Naive thymus-derived CD4-positive, alpha-beta T cell (primary cell): ENCODE measurements at regions of chr9 and their contacts with region 1.

Region 1: GRCh38 chr9:99906403-99907207 is at the start of gene STX17:
- DNase-seq: peak; percentile 78 to 94 (median 88)
- ATAC-seq: peak; percentile 90
- H3K4me3 ChIP-seq: peak within 1 kb of the TSS; percentile 96
- H3K4me3 Mint-ChIP-seq: peak within 1 kb of the TSS; percentile 92 to 99 (median 97)
- H3K27ac ChIP-seq: peak within 1 kb of the TSS; percentile 99
- H3K27ac Mint-ChIP-seq: peak within 1 kb of the TSS; percentile 96 to 100 (median 99)
- H3K4me1 ChIP-seq: peaks cover 14 to 17% of the 10 kb centered on the region in 2 donors
- H3K4me1 Mint-ChIP-seq: peaks cover 29 to 46% (median 40%) of the 10 kb centered on the region in 7 donors
- H3K27me3 ChIP-seq: no peaks in the 10 kb centered on the region
- H3K27me3 Mint-ChIP-seq: peaks cover 0 to 14% (median 7%) of the 10 kb centered on the region in 5 donors
- total RNA-seq, gene STX17: 34.2 to 63.2 (median 51.2) TPM

Region 2: GRCh38 chr9:99433555-99433954 is 473.1 kb before region 1 on chr9:
- CTCF ChIA-PET with region 1: no interaction called
- POLR2A ChIA-PET with region 1: no interaction called
- intact Hi-C with region 1: no loop called
- DNase-seq: peak in 1 of 9 donors; percentile 46
- ATAC-seq: peak; percentile 89
- H3K4me3 ChIP-seq: no peak overlapping the region
- H3K4me3 Mint-ChIP-seq: no peak overlapping the region
- H3K27ac ChIP-seq: no peak overlapping the region
- H3K27ac Mint-ChIP-seq: peak overlapping the region in 1 of 9 donors; percentile 67
- H3K4me1 ChIP-seq: no peaks in the 10 kb centered on the region
- H3K4me1 Mint-ChIP-seq: peaks cover 0 to 15% (median 0%) of the 10 kb centered on the region in 7 donors
- H3K27me3 ChIP-seq: no peaks in the 10 kb centered on the region
- H3K27me3 Mint-ChIP-seq: peaks cover 0 to 5% (median 0%) of the 10 kb centered on the region in 5 donors

Region 3: GRCh38 chr9:99807276-99807852 is 99.2 kb before region 1 on chr9:
- CTCF ChIA-PET with region 1: no interaction called
- POLR2A ChIA-PET with region 1: interaction called, 3 read pairs
- intact Hi-C with region 1: loop called in 1 of 2 experiments (anchors 1 kb)
- DNase-seq: peak in 8 of 9 donors; percentile 31 to 76 (median 68)
- ATAC-seq: peak; percentile 89
- H3K4me3 ChIP-seq: no peak overlapping the region
- H3K4me3 Mint-ChIP-seq: no peak overlapping the region
- H3K27ac ChIP-seq: no peak overlapping the region
- H3K27ac Mint-ChIP-seq: peak overlapping the region in 4 of 9 donors; percentile 1 to 63 (median 12)
- H3K4me1 ChIP-seq: peaks cover 0 to 5% of the 10 kb centered on the region in 2 donors
- H3K4me1 Mint-ChIP-seq: peaks cover 0 to 23% (median 4%) of the 10 kb centered on the region in 7 donors
- H3K27me3 ChIP-seq: no peaks in the 10 kb centered on the region
- H3K27me3 Mint-ChIP-seq: peaks cover 0 to 12% (median 0%) of the 10 kb centered on the region in 5 donors

Region 4: DNA sequence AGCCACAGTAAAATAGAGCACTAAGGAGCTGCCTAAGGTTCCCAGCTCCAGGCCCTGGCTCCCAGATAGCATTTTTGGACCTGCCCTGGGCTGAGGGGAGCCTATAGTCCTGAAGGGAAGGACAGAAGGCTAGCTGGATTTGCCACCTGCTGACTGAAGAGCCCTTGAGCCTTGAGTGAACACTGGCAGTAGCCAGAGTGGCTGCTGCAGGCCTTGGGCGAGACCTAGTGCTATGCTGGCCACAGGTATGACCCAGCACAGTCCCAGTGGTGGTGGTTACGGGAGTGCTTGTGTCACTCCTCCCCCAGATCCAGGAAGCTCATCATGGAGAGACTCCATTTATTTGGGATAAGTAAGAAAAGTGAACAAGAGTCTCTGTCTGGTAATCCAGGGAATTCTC is 10.5 kb before region 1 on chr9:
- CTCF ChIA-PET with region 1: no interaction called
- POLR2A ChIA-PET with region 1: no interaction called
- intact Hi-C with region 1: no loop called
- DNase-seq: no peak
- ATAC-seq: no peak
- H3K4me3 ChIP-seq: no peak overlapping the region
- H3K4me3 Mint-ChIP-seq: no peak overlapping the region
- H3K27ac ChIP-seq: no peak overlapping the region
- H3K27ac Mint-ChIP-seq: no peak overlapping the region
- H3K4me1 ChIP-seq: no peaks in the 10 kb centered on the region
- H3K4me1 Mint-ChIP-seq: no peaks in the 10 kb centered on the region
- H3K27me3 ChIP-seq: no peaks in the 10 kb centered on the region
- H3K27me3 Mint-ChIP-seq: peaks cover 0 to 65% (median 13%) of the 10 kb centered on the region in 5 donors

Region 5: GRCh38 chr9:99948896-99949295 is 42.3 kb after region 1 on chr9:
- CTCF ChIA-PET with region 1: interaction called, 4 read pairs
- POLR2A ChIA-PET with region 1: interaction called, 3 read pairs
- intact Hi-C with region 1: loop called in 1 of 2 experiments (anchors 5 kb)
- DNase-seq: no peak
- ATAC-seq: no peak
- H3K4me3 ChIP-seq: no peak overlapping the region
- H3K4me3 Mint-ChIP-seq: no peak overlapping the region
- H3K27ac ChIP-seq: no peak overlapping the region
- H3K27ac Mint-ChIP-seq: no peak overlapping the region
- H3K4me1 ChIP-seq: no peaks in the 10 kb centered on the region
- H3K4me1 Mint-ChIP-seq: peaks cover 0 to 30% (median 26%) of the 10 kb centered on the region in 7 donors
- H3K27me3 ChIP-seq: no peaks in the 10 kb centered on the region
- H3K27me3 Mint-ChIP-seq: no peaks in the 10 kb centered on the region

Region 6: DNA sequence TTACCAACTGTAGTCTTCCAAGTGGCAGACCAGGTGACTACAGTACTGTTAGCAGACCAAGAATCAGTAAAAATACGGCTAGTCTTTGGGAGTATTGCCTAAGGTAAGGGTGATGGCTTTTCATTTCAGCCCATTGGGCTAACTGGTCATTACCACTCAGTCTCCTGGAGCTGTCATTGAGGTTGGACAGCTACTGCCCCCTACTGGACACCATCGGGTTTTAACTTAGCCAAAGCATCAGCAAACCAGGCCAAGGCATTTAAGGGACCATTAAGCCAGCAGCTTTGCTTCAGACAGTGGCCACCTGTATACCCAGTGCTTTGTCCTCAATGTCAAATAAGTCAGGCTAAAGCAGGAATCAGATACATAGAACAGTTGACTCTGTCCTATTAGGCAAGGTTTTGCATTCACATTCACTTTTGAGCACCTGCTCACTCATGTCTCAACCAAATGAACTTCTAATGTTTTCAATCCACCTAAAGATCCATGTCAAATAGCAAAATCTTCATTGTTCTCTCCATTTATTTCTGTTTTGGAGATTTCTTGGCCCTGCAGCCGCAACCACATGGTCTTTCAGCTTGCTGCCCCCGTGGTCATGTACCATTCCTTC is 309.7 kb after region 1 on chr9:
- CTCF ChIA-PET with region 1: no interaction called
- POLR2A ChIA-PET with region 1: no interaction called
- intact Hi-C with region 1: loop called in 1 of 2 experiments (anchors 5 kb)
- DNase-seq: peak; percentile 17 to 53 (median 41)
- ATAC-seq: peak; percentile 84
- H3K4me3 ChIP-seq: no peak overlapping the region
- H3K4me3 Mint-ChIP-seq: no peak overlapping the region
- H3K27ac ChIP-seq: no peak overlapping the region
- H3K27ac Mint-ChIP-seq: no peak overlapping the region
- H3K4me1 ChIP-seq: no peaks in the 10 kb centered on the region
- H3K4me1 Mint-ChIP-seq: peaks cover 0 to 9% (median 0%) of the 10 kb centered on the region in 7 donors
- H3K27me3 ChIP-seq: no peaks in the 10 kb centered on the region
- H3K27me3 Mint-ChIP-seq: no peaks in the 10 kb centered on the region

Region 7: DNA sequence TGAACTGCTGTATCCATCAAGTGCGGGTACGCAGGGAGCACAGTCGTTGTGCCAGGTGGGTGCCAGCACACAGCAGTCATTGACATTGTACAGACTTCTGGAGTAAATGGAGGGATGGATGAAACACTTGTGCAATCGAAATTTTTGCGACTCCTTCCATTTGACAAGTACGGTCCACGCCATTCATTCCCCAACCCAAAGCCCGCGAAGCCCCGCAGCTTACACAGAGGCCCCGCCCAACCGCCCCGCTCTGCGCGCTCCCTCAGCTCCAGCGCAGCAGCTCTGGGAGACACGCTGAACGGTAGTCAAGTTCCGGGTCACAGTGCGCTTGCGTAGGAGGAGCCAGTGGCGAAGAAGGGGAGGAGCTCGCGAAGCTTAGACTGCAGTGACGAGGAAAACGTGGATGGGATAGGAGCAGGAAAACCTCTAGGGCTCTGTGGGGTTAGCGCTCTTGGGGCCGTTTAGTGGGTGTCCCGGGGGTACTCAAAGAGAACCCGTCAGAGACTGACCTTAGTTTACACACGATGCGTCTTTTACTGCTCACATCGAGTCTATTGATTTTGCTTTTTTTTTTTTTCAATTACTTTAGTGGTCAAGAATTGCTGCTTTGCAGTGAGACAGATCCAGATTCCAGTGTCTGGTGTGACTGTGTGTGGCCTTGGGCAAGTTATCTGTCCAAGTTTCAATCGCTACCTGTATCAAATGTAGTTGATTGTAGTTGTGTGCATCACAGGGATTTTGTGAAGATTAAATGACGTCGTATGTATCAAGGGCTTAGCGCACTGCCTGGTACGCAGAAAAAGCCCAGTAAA is 505.1 kb after region 1 on chr9:
- CTCF ChIA-PET with region 1: no interaction called
- POLR2A ChIA-PET with region 1: no interaction called
- intact Hi-C with region 1: loop called in 1 of 2 experiments (anchors 1 kb)
- DNase-seq: peak; percentile 58 to 87 (median 80)
- ATAC-seq: peak; percentile 100
- H3K4me3 ChIP-seq: peak overlapping the region; percentile 91
- H3K4me3 Mint-ChIP-seq: peak overlapping the region; percentile 83 to 98 (median 89)
- H3K27ac ChIP-seq: peak overlapping the region; percentile 55
- H3K27ac Mint-ChIP-seq: peak overlapping the region; percentile 56 to 90 (median 84)
- H3K4me1 ChIP-seq: peaks cover 10 to 15% of the 10 kb centered on the region in 2 donors
- H3K4me1 Mint-ChIP-seq: peaks cover 10 to 16% (median 13%) of the 10 kb centered on the region in 7 donors
- H3K27me3 ChIP-seq: no peaks in the 10 kb centered on the region
- H3K27me3 Mint-ChIP-seq: peaks cover 6 to 21% (median 15%) of the 10 kb centered on the region in 5 donors

Region 8: DNA sequence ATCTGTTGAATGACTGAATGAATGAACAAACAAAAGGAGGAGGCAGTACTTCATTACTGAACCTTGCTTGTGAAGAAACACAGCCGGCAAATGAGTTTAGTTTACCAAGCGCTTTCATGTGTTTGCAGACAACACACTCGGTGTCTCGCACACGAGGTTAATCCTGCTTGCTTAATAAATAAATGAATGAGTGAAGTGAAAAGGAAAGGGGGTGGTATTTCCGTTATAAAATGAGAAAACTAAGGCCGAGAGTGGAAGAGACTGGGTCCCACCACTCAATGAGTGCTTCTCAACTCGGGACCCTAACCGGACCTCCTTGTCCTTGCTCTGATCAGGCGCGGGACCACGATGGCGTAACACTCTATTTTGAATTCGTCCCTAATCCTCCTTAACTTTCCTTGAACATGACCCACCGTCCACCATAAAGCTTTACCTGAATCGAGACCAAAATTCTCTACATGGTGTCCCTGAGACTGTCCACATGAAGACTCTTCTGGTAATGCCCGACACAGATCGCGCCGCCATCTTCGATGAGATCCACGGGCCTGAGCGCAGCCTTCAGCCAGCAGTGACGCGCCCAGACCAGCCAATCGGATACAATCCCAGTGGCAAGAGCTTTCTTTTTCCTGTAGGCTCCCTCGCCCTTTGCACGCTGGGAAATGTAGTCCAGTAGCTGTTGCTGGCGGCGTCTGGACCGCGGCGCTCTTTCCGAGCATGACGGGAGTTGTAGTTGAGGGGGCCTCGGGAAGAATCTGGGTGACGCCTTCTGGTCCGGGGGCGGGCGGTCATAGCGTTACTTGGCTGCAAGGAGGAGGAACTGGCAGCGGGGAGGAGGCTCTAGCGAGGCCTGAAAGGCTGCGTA is 1491.7 kb after region 1 on chr9 and contains the starts of genes MRPL50 and ZNF189:
- CTCF ChIA-PET with region 1: no interaction called
- POLR2A ChIA-PET with region 1: no interaction called
- intact Hi-C with region 1: loop called in 1 of 2 experiments (anchors 2 kb)
- DNase-seq: peak; percentile 81 to 99 (median 96)
- ATAC-seq: peak; percentile 97
- H3K4me3 ChIP-seq: peak within 1 kb of the TSS; percentile 90
- H3K4me3 Mint-ChIP-seq: peak within 1 kb of the TSS; percentile 93 to 100 (median 98)
- H3K27ac ChIP-seq: peak within 1 kb of the TSS; percentile 94
- H3K27ac Mint-ChIP-seq: peak within 1 kb of the TSS; percentile 97 to 100 (median 99)
- H3K4me1 ChIP-seq: peaks cover 21 to 34% of the 10 kb centered on the region in 2 donors
- H3K4me1 Mint-ChIP-seq: peaks cover 53 to 90% (median 83%) of the 10 kb centered on the region in 7 donors
- H3K27me3 ChIP-seq: no peaks in the 10 kb centered on the region
- H3K27me3 Mint-ChIP-seq: no peaks in the 10 kb centered on the region
- total RNA-seq, gene MRPL50: 6.5 to 23.8 (median 11.5) TPM
- total RNA-seq, gene ZNF189: 8.5 to 25.0 (median 14.5) TPM